Activated T-helper 2 cell treated with anti-CD3 and anti-CD28 coated beads, Interferon-gamma antibody, Interleukin-2, Interleukin-4, amounts not matched to agents 10 μg/mL and 5 μg/mL and 100 μg/mL, durations not matched to agents 14 hours and 24 hours and 36 hours (primary cell): ENCODE measurements at regions of chr21 and their contacts with region 1.

Region 1: DNA sequence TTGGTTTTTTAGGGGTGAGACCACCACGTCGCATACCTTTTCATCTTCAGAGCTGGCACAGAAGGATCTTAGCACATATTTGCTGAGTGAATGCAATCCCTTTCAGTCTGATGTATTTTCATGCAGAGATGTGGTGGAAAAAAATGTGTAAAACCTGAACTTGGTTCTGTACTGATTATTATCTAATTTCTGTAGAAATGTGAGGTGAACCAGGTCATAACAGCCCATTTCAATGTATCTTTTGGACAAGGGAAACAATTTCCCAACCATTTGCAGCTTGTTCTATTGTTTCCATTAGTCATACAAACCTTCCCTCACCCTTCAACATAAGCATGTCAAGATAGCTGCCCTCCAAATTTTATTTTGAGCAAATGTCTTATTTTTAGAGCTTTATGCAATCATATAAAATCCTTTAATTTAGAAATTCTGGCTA is 46.8 kb upstream of the RUNX1 start:
- DNase-seq: no peak
- H3K4me3 Mint-ChIP-seq: no peak overlapping the region
- H3K27ac Mint-ChIP-seq: peak overlapping the region; percentile 93
- H3K4me1 Mint-ChIP-seq: peaks cover 65% of the 10 kb centered on the region
- H3K27me3 Mint-ChIP-seq: no peaks in the 10 kb centered on the region

Region 2: DNA sequence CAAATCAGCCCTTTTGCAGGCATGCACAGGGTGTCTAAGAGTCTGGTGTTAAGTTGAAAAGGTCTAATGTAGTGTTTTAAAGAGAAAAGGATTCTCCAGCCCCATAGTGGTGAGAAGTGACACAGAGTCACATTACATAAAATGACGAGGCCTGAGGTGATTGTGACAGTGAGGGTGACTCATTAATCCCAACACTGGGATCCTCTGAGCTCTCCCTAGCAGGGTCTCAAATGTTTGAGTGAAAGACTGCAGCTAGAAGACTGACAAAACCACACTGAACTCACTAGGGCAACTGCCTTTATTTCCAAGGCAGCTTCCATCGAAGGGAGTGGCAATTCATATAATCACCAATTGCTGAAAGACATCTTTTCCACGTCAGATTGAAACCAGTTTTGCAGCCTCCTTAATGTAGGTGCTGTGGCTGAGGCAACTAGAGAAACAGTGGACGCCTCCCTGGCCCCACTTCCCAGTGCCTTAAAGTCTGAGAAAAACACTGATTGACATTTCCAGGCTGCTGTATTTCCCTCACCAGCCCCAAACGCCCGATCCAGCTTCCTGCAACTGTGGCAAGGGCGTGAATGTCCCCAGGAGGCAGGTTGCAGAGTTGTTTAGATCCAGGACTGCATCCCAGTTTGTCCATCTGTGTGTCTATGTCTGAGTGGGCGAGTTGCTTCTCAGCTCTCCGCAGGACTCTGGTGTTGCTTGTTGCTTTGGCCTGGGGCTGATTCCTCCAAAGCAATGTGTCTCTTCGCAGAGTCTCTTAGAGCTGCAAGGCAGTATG is 128.2 kb before region 1 on chr21:
- intact Hi-C with region 1: loop called (anchors 2 kb)
- DNase-seq: peak; percentile 41
- H3K4me3 Mint-ChIP-seq: peak overlapping the region; percentile 69
- H3K27ac Mint-ChIP-seq: peak overlapping the region; percentile 99
- H3K4me1 Mint-ChIP-seq: peaks cover 82% of the 10 kb centered on the region
- H3K27me3 Mint-ChIP-seq: no peaks in the 10 kb centered on the region

Region 3: GRCh38 chr21:35150562-35151226 is 54.8 kb after region 1 on chr21:
- intact Hi-C with region 1: loop called (anchors 1 kb)
- DNase-seq: no peak
- H3K4me3 Mint-ChIP-seq: no peak overlapping the region
- H3K27ac Mint-ChIP-seq: peak overlapping the region; percentile 88
- H3K4me1 Mint-ChIP-seq: peaks cover 52% of the 10 kb centered on the region
- H3K27me3 Mint-ChIP-seq: no peaks in the 10 kb centered on the region

Region 4: GRCh38 chr21:35226948-35227744 is 131.3 kb after region 1 on chr21:
- intact Hi-C with region 1: loop called (anchors 2 kb)
- DNase-seq: peak; percentile 52
- H3K4me3 Mint-ChIP-seq: peak overlapping the region; percentile 37
- H3K27ac Mint-ChIP-seq: peak overlapping the region; percentile 72
- H3K4me1 Mint-ChIP-seq: peaks cover 52% of the 10 kb centered on the region
- H3K27me3 Mint-ChIP-seq: no peaks in the 10 kb centered on the region

Region 5: DNA sequence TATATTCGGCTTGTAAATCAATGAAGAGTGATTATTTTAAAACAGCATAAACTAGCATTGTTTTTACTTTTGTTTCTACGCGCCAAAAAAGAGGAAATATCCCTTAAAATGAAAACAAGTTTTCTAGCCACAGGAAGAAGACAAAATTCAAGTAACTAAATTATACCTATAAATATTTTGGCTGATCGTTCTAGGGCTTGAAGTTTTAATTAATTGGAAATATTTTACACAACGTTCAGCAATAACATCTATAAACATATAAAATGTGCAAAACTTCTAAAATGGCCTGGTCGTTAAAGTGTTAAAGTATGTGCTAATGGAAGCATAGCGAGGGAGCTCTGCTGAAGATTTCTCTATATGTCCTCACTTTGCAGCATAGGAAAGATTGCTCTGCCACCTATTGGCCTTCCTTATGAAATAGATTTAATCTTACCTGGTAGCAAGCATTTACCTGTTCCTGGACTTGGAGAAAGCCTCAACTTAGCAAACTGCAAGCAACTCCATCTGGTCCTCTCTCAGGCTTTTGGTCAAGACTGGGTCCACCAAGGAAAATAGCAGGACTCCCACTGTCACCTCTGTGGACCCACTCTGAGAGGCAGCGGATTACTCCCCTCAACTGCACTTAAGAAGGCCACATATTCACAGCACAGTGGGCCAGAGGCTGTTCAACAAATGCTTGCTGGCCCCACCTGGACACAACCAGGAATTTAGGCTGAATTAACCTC is 304.5 kb after region 1 on chr21:
- intact Hi-C with region 1: loop called (anchors 1 kb)
- DNase-seq: peak; percentile 20
- H3K4me3 Mint-ChIP-seq: peak overlapping the region; percentile 15
- H3K27ac Mint-ChIP-seq: peak overlapping the region; percentile 48
- H3K4me1 Mint-ChIP-seq: peaks cover 26% of the 10 kb centered on the region
- H3K27me3 Mint-ChIP-seq: no peaks in the 10 kb centered on the region